CD14-positive monocyte (primary cell): ENCODE measurements at regions of chr11 and their contacts with region 1.

Region 1: DNA sequence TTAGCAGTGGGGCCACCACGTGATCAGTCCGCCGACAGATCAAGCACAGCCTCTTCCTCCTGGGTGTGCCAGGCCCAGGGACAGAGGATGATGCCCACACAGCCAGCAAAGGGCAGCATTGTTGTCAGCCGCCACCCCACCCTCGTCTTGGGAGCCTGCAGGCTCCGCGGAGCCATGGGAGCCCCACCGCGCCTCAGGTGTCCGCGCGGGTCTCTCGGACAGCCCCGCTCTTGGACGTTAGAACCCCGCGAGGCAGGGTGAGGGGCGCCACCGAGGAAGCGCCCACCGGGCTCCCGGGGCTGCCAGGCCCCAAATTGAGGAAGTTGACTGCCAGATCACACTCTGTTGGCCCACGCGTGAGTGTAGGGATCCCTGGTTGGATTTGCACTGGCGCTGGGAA is 83.9 kb upstream of the MS4A8 start:
- DNase-seq: no peak
- H3K4me3 ChIP-seq: no peak overlapping the region
- H3K4me3 Mint-ChIP-seq: no peak overlapping the region
- H3K27ac ChIP-seq: no peak overlapping the region
- H3K27ac Mint-ChIP-seq: no peak overlapping the region
- H3K4me1 ChIP-seq: peaks cover 0 to 4% of the 10 kb centered on the region in 2 donors
- H3K4me1 Mint-ChIP-seq: peaks cover 6% of the 10 kb centered on the region
- H3K27me3 ChIP-seq: no peaks in the 10 kb centered on the region
- H3K27me3 Mint-ChIP-seq: peaks cover 0 to 8% (median under 1%) of the 10 kb centered on the region in 3 donors
- CTCF ChIP-seq: no peak

Region 2: DNA sequence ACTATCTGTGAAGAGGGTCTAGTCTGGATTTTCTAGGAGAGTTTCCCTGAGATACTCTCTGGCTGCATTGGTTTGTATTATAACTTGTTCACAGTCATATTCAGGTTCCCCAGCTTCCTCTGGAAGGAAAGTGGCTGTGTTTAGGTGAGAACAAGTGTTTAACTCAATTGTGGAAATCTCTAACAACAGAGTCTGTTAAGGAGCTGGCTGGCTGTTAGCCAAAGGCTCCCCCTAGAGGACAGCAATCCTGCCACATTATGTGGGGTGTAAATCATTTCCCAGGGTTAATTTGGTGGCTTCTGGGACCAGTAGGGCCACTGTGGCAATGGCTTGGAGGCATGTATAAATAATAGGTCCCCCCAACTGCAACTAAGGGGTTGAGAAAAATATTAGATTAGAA is 270.0 kb before region 1 on chr11:
- intact Hi-C with region 1: loop called (anchors 5 to 10 kb)
- DNase-seq: peak in 2 of 3 donors; percentile 40 to 59
- H3K4me3 ChIP-seq: no peak overlapping the region
- H3K4me3 Mint-ChIP-seq: no peak overlapping the region
- H3K27ac ChIP-seq: no peak overlapping the region
- H3K27ac Mint-ChIP-seq: no peak overlapping the region
- H3K4me1 ChIP-seq: peaks cover 5 to 11% of the 10 kb centered on the region in 2 donors
- H3K4me1 Mint-ChIP-seq: peaks cover 13% of the 10 kb centered on the region
- H3K27me3 ChIP-seq: no peaks in the 10 kb centered on the region
- H3K27me3 Mint-ChIP-seq: no peaks in the 10 kb centered on the region
- CTCF ChIP-seq: peak; percentile 78

Region 3: GRCh38 chr11:60672255-60672654 is 56.8 kb after region 1 on chr11:
- intact Hi-C with region 1: no loop called
- DNase-seq: no peak
- H3K4me3 ChIP-seq: no peak overlapping the region
- H3K4me3 Mint-ChIP-seq: no peak overlapping the region
- H3K27ac ChIP-seq: no peak overlapping the region
- H3K27ac Mint-ChIP-seq: no peak overlapping the region
- H3K4me1 ChIP-seq: no peaks in the 10 kb centered on the region
- H3K4me1 Mint-ChIP-seq: no peaks in the 10 kb centered on the region
- H3K27me3 ChIP-seq: no peaks in the 10 kb centered on the region
- H3K27me3 Mint-ChIP-seq: peaks cover 0 to 5% (median 2%) of the 10 kb centered on the region in 3 donors
- CTCF ChIP-seq: no peak